Caki2 (cell line): ENCODE measurements at regions of chr7 and their contacts with region 1.

Region 1: GRCh38 chr7:50953820-50954219 is 171.1 kb upstream of the GRB10 start:
- DNase-seq: no peak

Region 2: DNA sequence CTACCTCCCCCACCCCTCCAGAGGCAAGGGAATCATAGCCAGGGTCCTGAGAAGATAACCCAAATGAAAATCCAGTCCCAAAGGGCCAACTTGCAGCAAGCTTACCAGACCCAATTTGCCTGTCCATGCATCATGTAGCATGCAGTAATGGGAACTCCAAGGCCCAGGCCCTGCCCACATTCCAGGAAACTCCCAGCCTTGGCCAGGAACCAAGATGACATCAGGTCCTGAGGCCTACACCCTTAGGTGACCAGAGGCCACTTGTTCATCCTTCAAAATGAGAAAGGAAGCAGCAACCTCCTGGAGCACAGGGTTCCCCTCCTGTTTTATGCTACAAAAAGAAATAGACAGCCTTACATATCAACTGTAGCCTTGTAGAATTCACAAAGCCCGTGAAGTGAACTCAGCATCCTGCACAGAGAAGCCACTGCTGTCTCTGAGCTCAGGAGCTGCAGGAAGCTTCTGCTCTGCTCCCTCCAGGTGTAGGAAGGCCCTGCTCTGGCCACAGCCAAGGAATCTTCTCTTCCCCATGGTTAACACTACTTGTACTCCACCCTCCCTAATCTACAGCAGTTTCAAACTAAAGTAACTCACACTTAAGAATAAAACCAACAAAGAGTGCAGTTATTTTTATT is 140.9 kb before region 1 on chr7:
- in situ Hi-C with region 1: loop called (anchors 10 kb)
- DNase-seq: peak; percentile 83

Region 3: GRCh38 chr7:51029701-51030191 is 75.9 kb after region 1 on chr7:
- in situ Hi-C with region 1: loop called (anchors 10 kb)
- DNase-seq: no peak